ENCODE measurements at regions of chr6 and their contacts with region 1.

Region 1: DNA sequence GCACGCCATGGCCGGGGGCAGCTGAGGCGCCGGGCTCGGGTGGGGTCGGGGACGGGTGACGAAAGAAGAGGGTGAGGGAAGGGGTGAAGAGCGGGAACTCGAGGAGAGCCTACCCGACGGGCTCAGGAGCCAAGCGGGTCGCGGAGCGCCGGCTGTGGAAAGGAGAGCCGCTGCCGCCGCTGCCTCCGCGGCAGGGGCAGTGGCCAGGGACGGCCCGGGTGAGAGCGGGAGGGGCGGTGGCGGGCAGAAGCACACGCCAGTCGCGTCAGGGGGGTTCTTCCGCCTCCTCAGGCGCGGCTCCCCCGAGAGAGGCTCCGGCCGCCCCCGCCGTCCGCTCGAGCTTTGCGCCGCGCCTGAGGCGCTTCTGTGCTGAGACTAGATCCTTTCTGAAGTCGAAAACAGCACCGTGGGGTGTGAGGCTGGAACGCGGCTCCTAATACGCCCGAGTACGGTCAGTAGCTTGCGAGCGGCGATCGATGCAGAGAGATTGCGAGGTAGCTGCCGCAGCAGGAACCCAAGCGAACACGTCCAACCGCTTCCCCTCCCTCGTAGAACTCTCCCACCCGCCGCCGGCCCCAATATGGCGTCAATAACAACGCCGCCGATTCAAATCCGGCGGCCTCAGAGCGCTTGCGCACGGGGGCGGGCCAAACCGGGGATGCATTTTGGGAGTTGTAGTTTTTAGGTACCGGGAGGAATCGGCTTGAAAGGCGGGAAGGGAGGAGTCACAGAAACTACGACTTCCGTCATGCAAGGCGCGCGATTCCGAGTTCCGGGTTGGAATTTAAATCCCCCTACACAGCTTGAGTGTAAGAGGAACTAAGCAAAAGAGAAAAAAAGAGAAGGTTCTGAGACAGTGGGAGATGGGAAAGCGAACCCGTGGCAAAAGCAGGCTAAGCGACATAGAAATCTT is at the start of gene AKIRIN2:
- DNase-seq: peak; percentile 98
- ATAC-seq: peak; percentile 85
- H3K4me3 ChIP-seq: peak within 1 kb of the TSS; percentile 72 to 97 (median 94)
- H3K27ac ChIP-seq: peak within 1 kb of the TSS; percentile 96
- H3K4me1 ChIP-seq: peaks cover 42% of the 10 kb centered on the region
- H3K27me3 ChIP-seq: no peaks in the 10 kb centered on the region; a peak in 1 of 5 replicates
- CTCF ChIP-seq: no peak
- EP300 ChIP-seq: peak in 1 of 2 experiments; percentile 13; a peak in 1 of 4 replicates
- POLR2A ChIP-seq: peak; percentile 93 to 96
- RAD21 ChIP-seq: no peak
- total RNA-seq, gene AKIRIN2: 23.4 and 29.2 TPM in 2 replicates

Region 2: GRCh38 chr6:87322304-87323212 is 379.4 kb before region 1 on chr6 and contains the start of gene SMIM8:
- CTCF ChIA-PET with region 1: no interaction called
- POLR2A ChIA-PET with region 1: no interaction called
- in situ Hi-C with region 1: no loop called
- intact Hi-C with region 1: no loop called
- DNase-seq: peak; percentile 73
- ATAC-seq: peak; percentile 99
- H3K4me3 ChIP-seq: peak within 1 kb of the TSS; percentile 99 to 100 (median 100)
- H3K27ac ChIP-seq: peak within 1 kb of the TSS; percentile 60
- H3K4me1 ChIP-seq: peaks cover 8% of the 10 kb centered on the region
- H3K27me3 ChIP-seq: peaks cover 0 to 2% of the 10 kb centered on the region in 2 experiments; a peak in 1 of 5 replicates
- CTCF ChIP-seq: peak; percentile 94
- EP300 ChIP-seq: 0 out of 4 replicates have a peak, but pooled peaks of 1 of the 2 experiments have one; percentile 17
- POLR2A ChIP-seq: peak; percentile 81 to 97
- RAD21 ChIP-seq: peak; percentile 80
- total RNA-seq, gene SMIM8: 10.0 and 12.2 TPM in 2 replicates

Region 3: DNA sequence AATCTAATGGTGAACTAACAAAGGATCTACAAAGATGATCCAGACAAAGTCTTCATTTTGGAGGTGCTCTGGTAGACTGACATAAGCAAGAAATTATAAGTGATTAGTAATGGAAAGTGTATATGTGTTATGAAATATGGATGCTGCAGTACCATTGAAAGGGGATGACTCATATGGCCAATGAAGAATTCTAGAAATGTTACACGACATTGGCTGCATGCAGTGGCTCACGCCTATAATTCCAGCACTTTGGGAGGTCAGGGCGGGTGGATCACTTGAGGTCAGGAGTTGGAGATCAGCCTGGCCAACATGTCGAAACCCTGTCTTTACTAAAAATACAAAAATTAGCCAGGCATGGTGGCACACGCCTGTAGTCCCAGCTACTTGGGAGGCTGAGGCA is 270.7 kb before region 1 on chr6:
- CTCF ChIA-PET with region 1: no interaction called
- POLR2A ChIA-PET with region 1: no interaction called
- in situ Hi-C with region 1: no loop called
- intact Hi-C with region 1: no loop called
- DNase-seq: no peak
- ATAC-seq: no peak
- H3K4me3 ChIP-seq: no peak overlapping the region
- H3K27ac ChIP-seq: no peak overlapping the region
- H3K4me1 ChIP-seq: no peaks in the 10 kb centered on the region
- H3K27me3 ChIP-seq: peaks cover 0 to 14% of the 10 kb centered on the region in 2 experiments; a peak in 2 of 5 replicates
- CTCF ChIP-seq: no peak
- EP300 ChIP-seq: no peak
- POLR2A ChIP-seq: no peak
- RAD21 ChIP-seq: no peak

Region 4: GRCh38 chr6:87483929-87484328 is 218.0 kb before region 1 on chr6:
- CTCF ChIA-PET with region 1: no interaction called
- POLR2A ChIA-PET with region 1: no interaction called
- in situ Hi-C with region 1: no loop called
- intact Hi-C with region 1: no loop called
- DNase-seq: peak; percentile 13
- ATAC-seq: peak; percentile 79
- H3K4me3 ChIP-seq: no peak overlapping the region
- H3K27ac ChIP-seq: no peak overlapping the region
- H3K4me1 ChIP-seq: peaks cover 16% of the 10 kb centered on the region
- H3K27me3 ChIP-seq: no peaks in the 10 kb centered on the region
- CTCF ChIP-seq: peak; percentile 58
- EP300 ChIP-seq: no peak
- POLR2A ChIP-seq: no peak
- RAD21 ChIP-seq: no peak

Region 5: DNA sequence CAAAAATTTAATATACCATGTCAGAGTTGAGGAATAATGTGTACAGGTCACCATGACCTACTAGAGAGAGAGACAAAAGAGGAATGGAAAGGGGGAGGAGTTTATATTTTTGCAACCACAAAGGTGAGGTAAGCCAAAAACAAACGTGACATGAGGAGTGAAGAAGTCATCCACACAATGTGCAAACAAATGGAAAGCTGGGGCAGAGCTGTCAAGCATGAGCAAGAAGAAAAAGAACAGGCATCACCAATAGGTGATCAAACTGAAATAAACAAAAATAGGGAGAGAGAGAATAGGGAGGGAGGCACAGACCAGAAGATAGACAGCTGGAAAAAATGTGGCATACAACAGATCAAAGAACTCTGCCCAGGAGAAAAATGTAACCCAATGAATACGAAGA is 127.6 kb before region 1 on chr6:
- CTCF ChIA-PET with region 1: no interaction called
- POLR2A ChIA-PET with region 1: no interaction called
- in situ Hi-C with region 1: no loop called
- intact Hi-C with region 1: no loop called
- DNase-seq: peak; percentile 75
- ATAC-seq: peak; percentile 75
- H3K4me3 ChIP-seq: no peak overlapping the region; a peak in 1 of 6 replicates
- H3K27ac ChIP-seq: peak overlapping the region; percentile 59
- H3K4me1 ChIP-seq: peaks cover 62% of the 10 kb centered on the region
- H3K27me3 ChIP-seq: no peaks in the 10 kb centered on the region
- CTCF ChIP-seq: no peak
- EP300 ChIP-seq: no peak
- POLR2A ChIP-seq: no peak
- RAD21 ChIP-seq: no peak

Region 6: DNA sequence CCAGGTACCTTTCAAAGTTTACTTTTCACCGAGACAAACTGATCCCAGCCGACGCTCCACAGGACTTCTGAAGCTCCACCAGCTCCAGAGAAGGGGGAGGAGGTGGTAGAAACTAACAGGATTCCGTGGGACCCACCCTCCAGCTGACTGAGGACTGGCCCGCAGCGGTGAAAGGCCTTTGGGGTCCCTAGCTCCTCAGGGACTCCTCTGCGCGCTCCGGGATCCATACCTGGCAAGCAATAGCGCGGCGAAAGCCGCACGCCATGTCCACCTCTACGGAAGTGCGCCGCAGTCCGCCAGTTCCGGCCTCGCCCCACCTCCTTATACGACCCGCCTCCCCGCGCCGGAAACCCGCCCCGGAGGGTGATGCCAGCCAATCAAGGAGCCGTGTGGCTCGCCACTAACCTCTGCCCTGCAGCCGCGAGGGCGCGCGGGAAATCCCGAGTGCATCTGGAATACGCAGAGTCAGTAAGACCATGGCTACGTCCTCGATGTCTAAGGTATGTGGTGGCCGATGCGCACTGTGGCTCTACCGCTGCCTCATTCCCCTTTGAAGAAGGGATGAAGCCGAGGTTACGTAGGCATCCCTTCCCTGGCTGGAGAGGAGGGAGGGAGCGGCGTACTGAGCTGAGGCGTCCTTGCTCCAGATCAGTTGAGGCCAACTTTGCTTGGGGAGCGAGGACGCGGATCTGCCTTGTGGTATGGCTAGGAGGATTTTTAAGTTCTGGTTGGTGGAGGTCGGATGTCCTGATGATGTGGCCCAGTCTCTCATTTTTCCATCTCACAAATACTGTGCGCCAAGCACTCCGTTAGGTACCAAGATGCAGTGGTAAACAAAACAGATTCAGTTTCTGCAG is 112.0 kb before region 1 on chr6 and contains the starts of genes ORC3 and RARS2:
- CTCF ChIA-PET with region 1: no interaction called
- POLR2A ChIA-PET with region 1: interaction called, 6 read pairs
- in situ Hi-C with region 1: no loop called
- intact Hi-C with region 1: loop called (anchors 2 kb)
- DNase-seq: peak; percentile 93
- ATAC-seq: peak; percentile 99
- H3K4me3 ChIP-seq: peak within 1 kb of the TSS; percentile 90 to 98 (median 95)
- H3K27ac ChIP-seq: peak within 1 kb of the TSS; percentile 80
- H3K4me1 ChIP-seq: peaks cover 59% of the 10 kb centered on the region
- H3K27me3 ChIP-seq: no peaks in the 10 kb centered on the region; a peak in 1 of 5 replicates
- CTCF ChIP-seq: peak; percentile 17; the same call in 1 of the 2 replicates
- EP300 ChIP-seq: no peak
- POLR2A ChIP-seq: peak; percentile 87 to 96
- RAD21 ChIP-seq: no peak
- total RNA-seq, gene ORC3: 43.5 and 56.0 TPM in 2 replicates
- total RNA-seq, gene RARS2: 80.1 and 103 TPM in 2 replicates

Region 7: DNA sequence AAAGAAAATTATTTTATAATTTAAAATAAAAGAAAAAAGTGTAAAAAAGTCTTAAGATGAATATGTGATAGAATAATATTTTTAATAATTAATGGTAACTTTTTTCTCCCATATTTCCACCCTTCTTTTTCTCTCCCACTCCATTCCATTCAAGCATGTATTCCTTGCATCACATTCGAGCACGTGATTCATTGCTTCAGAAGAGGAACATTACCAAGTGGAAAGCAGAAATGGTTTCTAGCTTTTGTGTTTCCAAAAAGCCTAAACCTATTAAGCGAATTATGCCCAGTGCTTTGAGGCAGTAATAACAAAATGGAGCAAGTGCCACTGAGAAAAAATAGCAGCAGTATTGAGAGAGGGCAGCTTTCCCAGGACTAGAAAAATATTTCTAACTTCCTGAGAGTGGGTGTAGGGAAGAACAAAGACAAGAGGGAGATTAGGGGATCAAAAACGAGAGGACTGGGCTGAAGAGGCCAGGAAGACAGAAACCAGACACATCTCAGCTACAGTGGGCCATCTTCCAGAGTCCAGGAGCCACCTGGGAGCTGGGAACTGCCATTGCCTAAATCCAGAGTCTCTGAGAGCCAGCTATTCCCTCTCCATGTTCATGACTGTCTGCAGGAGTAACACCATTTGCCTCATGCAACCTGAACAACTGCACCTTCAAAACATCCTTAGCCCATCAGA is 15.1 kb after region 1 on chr6:
- CTCF ChIA-PET with region 1: no interaction called
- POLR2A ChIA-PET with region 1: interaction called, 11 read pairs
- in situ Hi-C with region 1: no loop called
- intact Hi-C with region 1: no loop called
- DNase-seq: no peak
- ATAC-seq: no peak; the same call in 2 of the 3 replicates
- H3K4me3 ChIP-seq: no peak overlapping the region
- H3K27ac ChIP-seq: no peak overlapping the region
- H3K4me1 ChIP-seq: peaks cover 23% of the 10 kb centered on the region
- H3K27me3 ChIP-seq: no peaks in the 10 kb centered on the region
- CTCF ChIP-seq: no peak
- EP300 ChIP-seq: no peak
- POLR2A ChIP-seq: no peak
- RAD21 ChIP-seq: no peak

Region 8: GRCh38 chr6:87789198-87789899 is 87.4 kb after region 1 on chr6:
- CTCF ChIA-PET with region 1: no interaction called
- POLR2A ChIA-PET with region 1: interaction called, 10 read pairs
- in situ Hi-C with region 1: no loop called
- intact Hi-C with region 1: no loop called
- DNase-seq: peak; percentile 93
- ATAC-seq: peak; percentile 91
- H3K4me3 ChIP-seq: peak overlapping the region in 1 of 3 experiments; percentile 42; a peak in 3 of 6 replicates
- H3K27ac ChIP-seq: peak overlapping the region; percentile 68
- H3K4me1 ChIP-seq: peaks cover 83% of the 10 kb centered on the region
- H3K27me3 ChIP-seq: no peaks in the 10 kb centered on the region
- CTCF ChIP-seq: no peak
- EP300 ChIP-seq: peak in 1 of 2 experiments; percentile 89; a peak in 2 of 4 replicates
- POLR2A ChIP-seq: no peak
- RAD21 ChIP-seq: no peak

Region 9: DNA sequence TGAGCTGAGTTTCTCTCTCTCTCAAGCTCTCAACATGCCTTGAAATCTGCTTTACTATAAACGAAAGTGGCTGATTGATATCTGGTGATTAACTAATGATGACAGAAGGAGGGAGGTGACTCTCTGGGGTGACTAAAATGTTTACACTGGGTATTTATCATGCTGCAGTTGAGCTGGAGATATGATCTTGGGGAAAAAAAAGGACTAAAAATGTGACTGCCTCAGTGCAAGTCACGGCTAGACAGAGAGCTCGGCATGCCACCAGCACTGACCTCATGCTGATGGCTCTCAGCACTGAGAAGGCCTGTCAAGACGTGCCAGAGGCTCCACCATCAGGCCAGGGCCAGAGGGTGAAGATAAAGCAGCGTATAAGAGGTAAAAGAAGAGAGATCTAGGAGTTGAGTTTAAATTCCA is 242.6 kb after region 1 on chr6:
- CTCF ChIA-PET with region 1: no interaction called
- POLR2A ChIA-PET with region 1: no interaction called
- in situ Hi-C with region 1: no loop called
- intact Hi-C with region 1: loop called (anchors 1 kb)
- DNase-seq: peak; percentile 71
- ATAC-seq: peak; percentile 100
- H3K4me3 ChIP-seq: 0 out of 6 replicates have a peak overlapping the region, but pooled peaks of 1 of the 3 experiments have one; percentile 1
- H3K27ac ChIP-seq: no peak overlapping the region
- H3K4me1 ChIP-seq: peaks cover 11% of the 10 kb centered on the region
- H3K27me3 ChIP-seq: peaks cover 0 to 8% of the 10 kb centered on the region in 2 experiments; a peak in 3 of 5 replicates
- CTCF ChIP-seq: peak; percentile 77
- EP300 ChIP-seq: no peak
- POLR2A ChIP-seq: no peak
- RAD21 ChIP-seq: peak; percentile 36; the same call in 1 of the 2 replicates

Measured in HepG2 (cell line).